ENCODE measurements at regions of chr4 and their contacts with region 1.

Region 1: DNA sequence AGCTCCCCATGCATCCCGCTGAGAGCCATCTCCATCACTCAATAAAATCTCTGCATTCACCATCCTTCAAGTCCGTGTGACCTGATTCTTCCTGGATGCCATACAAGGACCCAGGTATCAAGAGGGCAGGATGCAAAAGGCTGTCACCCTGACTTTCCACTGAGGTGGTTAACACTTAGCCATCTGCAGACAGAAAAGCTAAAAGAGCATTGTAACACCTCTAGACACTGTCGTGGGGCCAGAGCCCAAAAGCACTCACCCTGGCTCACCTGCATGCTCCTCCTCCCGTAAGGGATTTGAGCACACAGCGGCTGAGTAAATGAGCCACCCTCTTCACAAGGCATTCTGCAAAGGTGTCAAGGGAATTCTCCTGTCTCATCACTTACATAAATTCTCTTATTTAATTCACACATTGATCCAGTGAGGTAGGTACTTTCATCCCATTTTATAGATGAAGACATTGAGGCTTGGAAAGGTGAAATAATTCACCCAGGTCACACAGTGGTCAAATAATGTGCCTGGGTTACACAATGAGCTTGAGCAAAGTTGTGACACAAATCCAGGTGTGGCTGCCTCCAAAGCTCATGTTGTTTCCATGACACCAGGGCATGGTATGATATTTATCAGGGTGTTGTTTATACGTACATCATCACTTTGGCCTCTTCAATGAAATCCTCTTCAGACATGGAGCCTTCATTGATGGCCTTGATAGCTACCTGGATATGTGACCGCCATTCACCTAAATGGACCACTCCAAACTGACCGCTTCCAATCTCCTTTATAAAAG is 48.0 kb downstream of the TXK start:
- DNase-seq: no peak
- ATAC-seq: no peak
- H3K4me3 ChIP-seq: no peak overlapping the region
- H3K4me3 Mint-ChIP-seq: no peak overlapping the region
- H3K27ac ChIP-seq: no peak overlapping the region
- H3K27ac Mint-ChIP-seq: peak overlapping the region in 4 of 9 donors; percentile 36 to 78 (median 56)
- H3K4me1 ChIP-seq: no peaks in the 10 kb centered on the region
- H3K4me1 Mint-ChIP-seq: peaks cover 0 to 40% (median 14%) of the 10 kb centered on the region in 7 donors
- H3K27me3 ChIP-seq: no peaks in the 10 kb centered on the region
- H3K27me3 Mint-ChIP-seq: no peaks in the 10 kb centered on the region

Region 2: GRCh38 chr4:47668810-47669408 is 417.1 kb before region 1 on chr4:
- CTCF ChIA-PET with region 1: no interaction called
- POLR2A ChIA-PET with region 1: no interaction called
- intact Hi-C with region 1: loop called in 1 of 2 experiments (anchors 2 kb)
- DNase-seq: peak in 6 of 9 donors; percentile 13 to 40 (median 37)
- ATAC-seq: no peak
- H3K4me3 ChIP-seq: no peak overlapping the region
- H3K4me3 Mint-ChIP-seq: no peak overlapping the region
- H3K27ac ChIP-seq: no peak overlapping the region
- H3K27ac Mint-ChIP-seq: no peak overlapping the region
- H3K4me1 ChIP-seq: no peaks in the 10 kb centered on the region
- H3K4me1 Mint-ChIP-seq: no peaks in the 10 kb centered on the region
- H3K27me3 ChIP-seq: no peaks in the 10 kb centered on the region
- H3K27me3 Mint-ChIP-seq: peaks cover 7 to 34% (median 24%) of the 10 kb centered on the region in 5 donors

Region 3: GRCh38 chr4:47926639-47927258 is 159.3 kb before region 1 on chr4:
- CTCF ChIA-PET with region 1: interaction called, 4 read pairs
- POLR2A ChIA-PET with region 1: no interaction called
- intact Hi-C with region 1: loop called (anchors 1 to 2 kb)
- DNase-seq: peak in 7 of 9 donors; percentile 15 to 55 (median 44)
- ATAC-seq: peak; percentile 95
- H3K4me3 ChIP-seq: peak overlapping the region; percentile 6
- H3K4me3 Mint-ChIP-seq: peak overlapping the region in 9 of 10 donors; percentile 25 to 70 (median 63)
- H3K27ac ChIP-seq: no peak overlapping the region
- H3K27ac Mint-ChIP-seq: no peak overlapping the region
- H3K4me1 ChIP-seq: no peaks in the 10 kb centered on the region
- H3K4me1 Mint-ChIP-seq: peaks cover 5 to 9% (median 7%) of the 10 kb centered on the region in 7 donors
- H3K27me3 ChIP-seq: no peaks in the 10 kb centered on the region
- H3K27me3 Mint-ChIP-seq: peaks cover 12 to 41% (median 22%) of the 10 kb centered on the region in 5 donors

Region 4: DNA sequence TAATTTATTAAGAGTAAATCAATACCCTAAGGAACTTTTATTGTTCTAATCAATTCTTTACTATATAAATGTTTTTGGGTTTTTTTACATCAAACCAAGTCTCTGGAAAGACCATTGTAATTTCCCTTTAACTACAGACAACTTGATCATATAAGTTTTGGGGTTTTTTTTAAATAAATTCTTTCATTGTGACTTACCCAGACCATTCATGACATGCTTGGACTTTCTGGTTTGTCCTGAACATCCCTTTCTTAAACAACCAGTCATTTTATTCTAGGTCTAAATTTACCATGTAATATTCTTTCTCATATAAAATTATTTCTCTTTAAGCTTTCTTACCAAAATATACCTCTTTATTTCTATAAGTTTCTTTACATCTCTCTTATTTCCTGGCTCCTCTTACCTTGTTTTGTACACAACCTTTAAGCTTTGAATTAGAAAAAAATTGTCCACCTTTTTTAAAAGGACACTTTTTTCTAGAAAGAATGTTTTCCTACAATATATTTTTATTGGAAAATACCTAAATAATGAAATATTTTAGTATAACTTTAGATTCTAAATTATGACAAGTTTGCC is 77.9 kb before region 1 on chr4:
- CTCF ChIA-PET with region 1: interaction called, 3 read pairs
- POLR2A ChIA-PET with region 1: interaction called, 3 read pairs
- intact Hi-C with region 1: loop called (anchors 1 kb)
- DNase-seq: no peak
- ATAC-seq: no peak
- H3K4me3 ChIP-seq: no peak overlapping the region
- H3K4me3 Mint-ChIP-seq: no peak overlapping the region
- H3K27ac ChIP-seq: no peak overlapping the region
- H3K27ac Mint-ChIP-seq: no peak overlapping the region
- H3K4me1 ChIP-seq: no peaks in the 10 kb centered on the region
- H3K4me1 Mint-ChIP-seq: no peaks in the 10 kb centered on the region
- H3K27me3 ChIP-seq: no peaks in the 10 kb centered on the region
- H3K27me3 Mint-ChIP-seq: peaks cover 0 to 14% (median 5%) of the 10 kb centered on the region in 5 donors

Region 5: GRCh38 chr4:48016141-48017103 is 69.6 kb before region 1 on chr4 and contains the starts of genes CNGA1 and NIPAL1:
- CTCF ChIA-PET with region 1: no interaction called
- POLR2A ChIA-PET with region 1: no interaction called
- intact Hi-C with region 1: loop called (anchors 1 to 5 kb)
- DNase-seq: peak; percentile 56 to 79 (median 65)
- ATAC-seq: peak; percentile 96
- H3K4me3 ChIP-seq: peak within 1 kb of the TSS; percentile 75
- H3K4me3 Mint-ChIP-seq: peak within 1 kb of the TSS; percentile 78 to 95 (median 86)
- H3K27ac ChIP-seq: peak within 1 kb of the TSS; percentile 17
- H3K27ac Mint-ChIP-seq: peak within 1 kb of the TSS in 5 of 9 donors; percentile 7 to 91 (median 50)
- H3K4me1 ChIP-seq: peaks cover 0 to 8% of the 10 kb centered on the region in 2 donors
- H3K4me1 Mint-ChIP-seq: peaks cover 6 to 12% (median 10%) of the 10 kb centered on the region in 7 donors
- H3K27me3 ChIP-seq: no peaks in the 10 kb centered on the region
- H3K27me3 Mint-ChIP-seq: peaks cover 3 to 32% (median 11%) of the 10 kb centered on the region in 5 donors
- total RNA-seq, gene CNGA1: not detected
- total RNA-seq, gene NIPAL1: 0.45 to 3.3 (median 1.9) TPM in 4 of 5 experiments, not detected in the other

Region 6: DNA sequence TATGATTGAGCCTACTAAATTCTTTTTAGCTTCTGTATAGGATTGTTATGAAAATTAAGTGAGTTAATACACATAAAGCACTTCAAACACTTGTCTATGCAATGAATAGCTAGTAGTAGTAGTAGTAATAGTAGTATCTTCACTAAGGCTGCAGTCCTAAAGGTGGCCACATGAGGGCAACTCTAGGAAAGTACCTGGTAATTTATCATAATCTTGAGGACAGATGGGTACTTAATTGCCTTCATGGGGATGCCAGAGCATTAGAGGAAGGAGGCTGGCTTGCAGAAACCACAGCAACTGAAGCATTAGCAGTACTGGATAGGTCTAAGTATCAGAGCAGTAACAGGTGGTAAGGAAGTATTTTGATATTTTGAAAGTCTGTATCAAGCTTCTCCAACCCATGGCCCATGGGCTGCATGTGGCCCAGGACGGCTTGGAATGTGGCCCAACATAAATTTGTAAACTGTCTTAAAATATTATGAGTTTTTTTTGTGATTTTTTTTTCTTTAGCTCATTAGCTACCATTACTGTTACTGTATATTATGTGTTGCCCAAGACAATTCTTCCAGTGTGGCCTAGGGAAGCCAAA is 52.1 kb before region 1 on chr4:
- CTCF ChIA-PET with region 1: interaction called, 30 read pairs
- POLR2A ChIA-PET with region 1: no interaction called
- intact Hi-C with region 1: loop called (anchors 1 kb)
- DNase-seq: peak in 7 of 9 donors; percentile 21 to 55 (median 52)
- ATAC-seq: peak; percentile 91
- H3K4me3 ChIP-seq: no peak overlapping the region
- H3K4me3 Mint-ChIP-seq: no peak overlapping the region
- H3K27ac ChIP-seq: no peak overlapping the region
- H3K27ac Mint-ChIP-seq: no peak overlapping the region
- H3K4me1 ChIP-seq: peaks cover 3 to 4% of the 10 kb centered on the region in 2 donors
- H3K4me1 Mint-ChIP-seq: peaks cover 4 to 22% (median 15%) of the 10 kb centered on the region in 7 donors
- H3K27me3 ChIP-seq: no peaks in the 10 kb centered on the region
- H3K27me3 Mint-ChIP-seq: no peaks in the 10 kb centered on the region

Region 7: DNA sequence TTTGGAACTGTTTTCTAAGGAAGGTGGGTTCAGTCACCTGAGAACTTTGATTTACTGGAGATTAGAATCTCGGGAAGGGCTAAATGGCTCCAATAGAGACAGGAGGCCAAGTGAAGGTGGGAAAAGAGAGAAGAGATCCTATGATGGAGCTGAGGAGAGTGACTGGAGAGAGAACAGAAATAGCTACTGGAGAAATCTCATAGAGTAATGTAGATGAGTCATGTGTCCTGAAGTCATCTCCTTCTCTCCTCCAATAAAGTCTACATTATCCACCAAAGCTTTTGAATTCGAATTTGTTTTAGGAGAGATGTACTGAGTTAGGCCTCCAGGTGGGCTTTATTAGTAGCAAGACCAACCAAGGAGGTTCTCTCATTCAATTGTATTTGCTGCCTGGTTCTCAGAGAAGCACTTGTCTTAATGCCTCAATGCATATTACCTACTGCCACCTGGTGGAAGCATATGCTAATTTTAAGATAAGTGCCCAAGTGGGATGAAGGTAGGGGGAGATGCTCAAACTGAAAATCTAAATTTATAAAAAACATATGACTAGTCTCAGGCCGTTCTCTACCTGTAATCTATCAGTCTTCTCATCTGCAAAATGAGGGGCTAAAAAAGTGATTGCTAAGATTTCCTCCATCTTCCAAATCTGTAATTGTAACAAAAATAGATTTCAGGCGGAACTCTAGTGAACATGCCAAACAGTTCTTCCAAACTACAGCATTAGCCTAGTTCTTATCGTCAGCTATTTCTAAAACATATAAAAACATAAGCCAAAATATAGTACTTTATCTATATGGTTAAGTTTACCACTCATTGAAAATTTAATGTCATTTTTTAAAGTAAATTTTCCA is 23.6 kb after region 1 on chr4:
- CTCF ChIA-PET with region 1: interaction called, 3 read pairs
- POLR2A ChIA-PET with region 1: interaction called, 3 read pairs
- intact Hi-C with region 1: loop called in 1 of 2 experiments (anchors 2 kb)
- DNase-seq: peak in 7 of 9 donors; percentile 19 to 61 (median 49)
- ATAC-seq: peak; percentile 82
- H3K4me3 ChIP-seq: no peak overlapping the region
- H3K4me3 Mint-ChIP-seq: no peak overlapping the region
- H3K27ac ChIP-seq: no peak overlapping the region
- H3K27ac Mint-ChIP-seq: peak overlapping the region in 8 of 9 donors; percentile 0 to 80 (median 58)
- H3K4me1 ChIP-seq: peaks cover 0 to 19% of the 10 kb centered on the region in 2 donors
- H3K4me1 Mint-ChIP-seq: peaks cover 35 to 72% (median 56%) of the 10 kb centered on the region in 7 donors
- H3K27me3 ChIP-seq: no peaks in the 10 kb centered on the region
- H3K27me3 Mint-ChIP-seq: no peaks in the 10 kb centered on the region

Measured in naive thymus-derived CD4-positive, alpha-beta T cell (primary cell).